ENCODE measurements at regions of chr6 and their contacts with region 1.

Region 1: GRCh38 chr6:85449818-85450759 is at the start of gene NT5E:
- DNase-seq: no peak
- ATAC-seq: peak; percentile 88
- H3K4me3 ChIP-seq: peak within 1 kb of the TSS; percentile 83
- H3K27ac ChIP-seq: peak within 1 kb of the TSS; percentile 81
- H3K4me1 ChIP-seq: peaks cover 19% of the 10 kb centered on the region
- H3K27me3 ChIP-seq: no peaks in the 10 kb centered on the region
- CTCF ChIP-seq: peak in 2 of 3 experiments; percentile 14 to 20; a peak in 1 of 6 replicates
- EP300 ChIP-seq: no peak
- POLR2A ChIP-seq: peak; percentile 79
- RAD21 ChIP-seq: 0 out of 2 replicates have a peak, but pooled peaks have one; percentile 4
- polyA plus RNA-seq, gene NT5E: 1.9 to 3.9 TPM

Region 2: GRCh38 chr6:85354761-85355618 is 95.1 kb before region 1 on chr6:
- CTCF ChIA-PET with region 1: interaction called, 7 read pairs
- POLR2A ChIA-PET with region 1: no interaction called
- RAD21 ChIA-PET with region 1: interaction called, 9 read pairs
- SMC1A ChIA-PET with region 1: interaction called, 26 read pairs
- in situ Hi-C with region 1: no loop called
- intact Hi-C with region 1: loop called (anchors 1 kb)
- DNase-seq: peak; percentile 25
- ATAC-seq: peak; percentile 99
- H3K4me3 ChIP-seq: no peak overlapping the region
- H3K27ac ChIP-seq: no peak overlapping the region
- H3K4me1 ChIP-seq: no peaks in the 10 kb centered on the region
- H3K27me3 ChIP-seq: no peaks in the 10 kb centered on the region
- CTCF ChIP-seq: peak; percentile 90 to 93 (median 91)
- EP300 ChIP-seq: no peak
- POLR2A ChIP-seq: no peak
- RAD21 ChIP-seq: peak; percentile 96

Region 3: DNA sequence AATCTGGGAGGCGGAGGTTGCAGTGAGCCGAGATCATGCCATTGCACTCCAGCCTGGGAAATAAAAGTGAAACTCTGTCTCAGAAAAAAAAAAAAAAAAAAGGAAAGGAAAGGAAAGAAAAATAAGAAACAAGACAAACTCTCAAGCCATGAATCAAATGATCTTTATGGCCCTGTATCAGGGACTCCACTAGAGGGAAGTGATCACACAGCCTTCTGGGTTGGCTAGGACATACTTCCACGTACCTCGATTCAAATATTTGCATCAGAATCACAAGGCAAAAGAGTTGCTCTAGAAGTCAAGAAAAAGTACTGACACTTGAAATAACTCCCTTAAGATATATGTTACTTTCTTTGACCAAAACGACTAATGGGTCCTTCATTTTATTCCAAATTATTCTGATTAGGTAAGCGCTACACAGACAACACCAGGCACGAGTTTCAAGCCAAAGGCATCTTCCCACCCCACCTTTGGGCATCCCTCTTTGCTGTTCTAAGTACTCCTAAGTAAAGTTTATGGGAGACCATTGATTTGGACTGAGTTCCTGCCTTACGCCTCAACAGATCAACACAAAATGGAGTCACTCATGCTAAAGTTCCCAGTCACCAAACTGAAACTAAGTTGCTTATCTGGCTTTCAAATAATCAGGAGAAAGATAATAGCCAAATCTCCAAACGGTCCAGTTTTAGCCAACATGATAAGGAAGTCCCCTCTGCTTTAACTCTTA is 77.7 kb before region 1 on chr6:
- CTCF ChIA-PET with region 1: interaction called, 6 read pairs
- POLR2A ChIA-PET with region 1: no interaction called
- RAD21 ChIA-PET with region 1: interaction called, 11 read pairs
- SMC1A ChIA-PET with region 1: interaction called, 10 read pairs
- in situ Hi-C with region 1: no loop called
- intact Hi-C with region 1: no loop called
- DNase-seq: no peak
- ATAC-seq: peak; percentile 76
- H3K4me3 ChIP-seq: no peak overlapping the region
- H3K27ac ChIP-seq: no peak overlapping the region
- H3K4me1 ChIP-seq: no peaks in the 10 kb centered on the region
- H3K27me3 ChIP-seq: no peaks in the 10 kb centered on the region
- CTCF ChIP-seq: peak; percentile 19 to 45 (median 34); a peak in 4 of 6 replicates
- EP300 ChIP-seq: no peak
- POLR2A ChIP-seq: no peak
- RAD21 ChIP-seq: peak; percentile 63

Region 4: GRCh38 chr6:85419046-85419759 is 30.9 kb before region 1 on chr6:
- CTCF ChIA-PET with region 1: interaction called, 8 read pairs
- POLR2A ChIA-PET with region 1: interaction called, 27 read pairs
- RAD21 ChIA-PET with region 1: interaction called, 20 read pairs
- SMC1A ChIA-PET with region 1: interaction called, 11 read pairs
- in situ Hi-C with region 1: no loop called
- intact Hi-C with region 1: no loop called
- DNase-seq: no peak
- ATAC-seq: peak; percentile 85
- H3K4me3 ChIP-seq: 0 out of 2 replicates have a peak overlapping the region, but pooled peaks have one; percentile 24
- H3K27ac ChIP-seq: 0 out of 2 replicates have a peak overlapping the region, but pooled peaks have one; percentile 15
- H3K4me1 ChIP-seq: peaks cover 9% of the 10 kb centered on the region
- H3K27me3 ChIP-seq: no peaks in the 10 kb centered on the region
- CTCF ChIP-seq: no peak
- EP300 ChIP-seq: peak in 1 of 2 experiments; percentile 74; a peak in 1 of 4 replicates
- POLR2A ChIP-seq: no peak
- RAD21 ChIP-seq: no peak

Region 5: GRCh38 chr6:85476532-85476931 is 26.4 kb after region 1 on chr6:
- CTCF ChIA-PET with region 1: interaction called, 188 read pairs
- POLR2A ChIA-PET with region 1: interaction called, 4 read pairs
- RAD21 ChIA-PET with region 1: interaction called, 80 read pairs
- SMC1A ChIA-PET with region 1: interaction called, 120 read pairs
- in situ Hi-C with region 1: no loop called
- intact Hi-C with region 1: no loop called
- DNase-seq: no peak
- ATAC-seq: no peak
- H3K4me3 ChIP-seq: no peak overlapping the region
- H3K27ac ChIP-seq: no peak overlapping the region
- H3K4me1 ChIP-seq: no peaks in the 10 kb centered on the region
- H3K27me3 ChIP-seq: no peaks in the 10 kb centered on the region
- CTCF ChIP-seq: no peak
- EP300 ChIP-seq: no peak
- POLR2A ChIP-seq: no peak
- RAD21 ChIP-seq: peak; percentile 14; the same call in 1 of the 2 replicates

Measured in GM12878 (cell line).